CD4-positive, alpha-beta T cell (primary cell): ENCODE measurements at regions of chr5 and their contacts with region 1.

Region 1: GRCh38 chr5:142156839-142157463 is 48.4 kb downstream of the NDFIP1 start:
- DNase-seq: no peak
- ATAC-seq: no peak
- H3K4me3 ChIP-seq: no peak overlapping the region
- H3K4me3 Mint-ChIP-seq: no peak overlapping the region
- H3K27ac ChIP-seq: no peak overlapping the region
- H3K27ac Mint-ChIP-seq: no peak overlapping the region
- H3K4me1 ChIP-seq: no peaks in the 10 kb centered on the region
- H3K4me1 Mint-ChIP-seq: peaks cover 36% of the 10 kb centered on the region
- H3K27me3 ChIP-seq: no peaks in the 10 kb centered on the region
- H3K27me3 Mint-ChIP-seq: no peaks in the 10 kb centered on the region
- CTCF ChIP-seq: no peak

Region 2: GRCh38 chr5:142221091-142221860 is 64.3 kb after region 1 on chr5:
- CTCF ChIA-PET with region 1: no interaction called
- POLR2A ChIA-PET with region 1: no interaction called
- intact Hi-C with region 1: loop called in 1 of 2 experiments (anchors 5 kb)
- DNase-seq: no peak
- ATAC-seq: no peak
- H3K4me3 ChIP-seq: no peak overlapping the region
- H3K4me3 Mint-ChIP-seq: no peak overlapping the region
- H3K27ac ChIP-seq: no peak overlapping the region
- H3K27ac Mint-ChIP-seq: no peak overlapping the region
- H3K4me1 ChIP-seq: peaks cover 29% of the 10 kb centered on the region
- H3K4me1 Mint-ChIP-seq: peaks cover 42% of the 10 kb centered on the region
- H3K27me3 ChIP-seq: no peaks in the 10 kb centered on the region
- H3K27me3 Mint-ChIP-seq: no peaks in the 10 kb centered on the region
- CTCF ChIP-seq: no peak

Region 3: DNA sequence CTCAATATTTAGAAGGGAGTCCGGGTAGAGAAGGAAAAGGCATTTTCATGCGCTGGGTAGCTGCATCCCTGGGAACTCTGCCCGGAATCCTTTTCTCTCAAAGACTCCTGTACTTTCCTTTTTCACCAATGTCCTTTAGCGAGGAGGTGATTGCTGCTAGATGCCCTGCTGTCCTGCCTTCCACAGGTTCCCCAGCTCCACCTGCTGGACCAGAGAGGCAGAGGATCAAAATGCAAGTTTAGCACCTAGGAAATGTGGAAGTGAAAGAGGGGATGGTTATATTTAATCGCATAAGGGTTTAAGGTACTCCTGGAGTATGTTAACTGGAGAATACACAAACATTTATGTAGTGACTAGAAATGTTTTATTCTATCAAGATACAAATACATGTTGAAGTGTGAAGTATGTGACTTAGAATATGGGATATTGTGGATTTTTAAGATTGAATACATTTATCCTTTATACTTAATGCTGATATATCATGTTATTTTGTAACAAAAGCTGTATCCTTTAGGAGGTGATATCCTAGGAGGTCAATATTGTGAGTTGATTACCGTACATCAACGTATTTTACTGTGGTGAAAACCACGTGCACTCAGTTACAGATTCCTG is 759.0 kb after region 1 on chr5:
- CTCF ChIA-PET with region 1: no interaction called
- POLR2A ChIA-PET with region 1: no interaction called
- intact Hi-C with region 1: no loop called
- DNase-seq: peak in 4 of 14 experiments; percentile 10 to 33 (median 19)
- ATAC-seq: no peak
- H3K4me3 ChIP-seq: no peak overlapping the region
- H3K4me3 Mint-ChIP-seq: no peak overlapping the region
- H3K27ac ChIP-seq: no peak overlapping the region
- H3K27ac Mint-ChIP-seq: no peak overlapping the region
- H3K4me1 ChIP-seq: no peaks in the 10 kb centered on the region
- H3K4me1 Mint-ChIP-seq: no peaks in the 10 kb centered on the region
- H3K27me3 ChIP-seq: no peaks in the 10 kb centered on the region
- H3K27me3 Mint-ChIP-seq: no peaks in the 10 kb centered on the region
- CTCF ChIP-seq: no peak